Activated B cell treated with CpG ODN at 0.5 μM for 24 hours (primary cell): ENCODE measurements at regions of chrX and their contacts with region 1.

Region 1: DNA sequence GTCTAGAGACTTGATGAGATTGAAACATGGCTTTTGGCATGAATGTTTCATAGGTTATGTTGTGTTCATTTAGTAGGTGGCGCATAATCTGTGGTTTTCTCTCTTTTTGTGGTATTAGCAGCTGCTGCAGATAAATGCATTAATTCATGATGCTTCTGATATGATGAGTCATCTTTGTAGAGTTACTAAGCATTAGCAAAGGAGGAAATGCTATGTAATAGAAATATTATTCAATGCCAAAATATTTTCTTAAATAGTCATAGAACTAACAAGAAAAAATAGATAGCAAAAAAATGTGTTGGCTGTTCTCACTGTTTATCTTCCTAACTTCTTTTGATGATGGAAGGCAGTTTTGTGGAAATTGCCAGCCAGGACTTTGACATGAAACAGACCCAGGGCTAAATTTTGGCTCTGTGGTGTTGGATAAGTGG is 3.6 kb downstream of the ZXDB start:
- DNase-seq: no peak
- ATAC-seq: no peak
- H3K4me3 Mint-ChIP-seq: peak overlapping the region; percentile 74
- H3K27ac Mint-ChIP-seq: peak overlapping the region; percentile 35
- H3K4me1 Mint-ChIP-seq: peaks cover 49% of the 10 kb centered on the region
- H3K27me3 Mint-ChIP-seq: no peaks in the 10 kb centered on the region
- CTCF ChIP-seq: no peak

Region 2: DNA sequence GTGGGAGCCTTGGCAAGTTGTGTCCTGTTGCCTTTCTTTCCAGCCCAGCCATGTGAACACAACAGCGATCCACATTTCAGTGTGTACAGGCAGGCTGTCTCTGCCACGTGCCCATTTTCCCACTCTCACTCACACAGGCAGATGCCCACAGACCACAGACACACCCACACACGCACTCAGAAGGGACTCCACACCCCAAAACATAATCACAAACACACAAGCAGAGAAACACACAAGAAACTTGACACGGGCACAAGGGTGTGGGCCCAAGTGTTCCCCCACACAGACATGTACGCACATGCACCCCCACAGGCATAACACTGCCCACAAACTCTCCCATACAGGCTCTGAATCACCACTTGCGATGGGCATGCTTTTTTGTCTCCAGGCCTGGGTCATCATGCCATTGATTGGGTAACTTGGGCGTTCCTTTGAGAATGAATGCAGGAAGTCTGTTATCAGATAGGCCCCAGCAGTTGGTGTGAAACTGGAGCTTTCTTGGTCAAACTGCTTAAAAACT is 782.0 kb before region 1 on chrX:
- CTCF ChIA-PET with region 1: no interaction called
- POLR2A ChIA-PET with region 1: no interaction called
- intact Hi-C with region 1: loop called (anchors 5 kb)
- DNase-seq: no peak
- ATAC-seq: peak; percentile 39
- H3K4me3 Mint-ChIP-seq: peak overlapping the region; percentile 78
- H3K27ac Mint-ChIP-seq: peak overlapping the region; percentile 93
- H3K4me1 Mint-ChIP-seq: peaks cover 69% of the 10 kb centered on the region
- H3K27me3 Mint-ChIP-seq: no peaks in the 10 kb centered on the region
- CTCF ChIP-seq: no peak

Region 3: GRCh38 chrX:56995271-56995994 is 600.0 kb before region 1 on chrX and contains the start of gene SPIN3:
- CTCF ChIA-PET with region 1: no interaction called
- POLR2A ChIA-PET with region 1: no interaction called
- intact Hi-C with region 1: loop called (anchors 10 kb)
- DNase-seq: peak; percentile 22
- ATAC-seq: peak; percentile 88
- H3K4me3 Mint-ChIP-seq: peak within 1 kb of the TSS; percentile 91
- H3K27ac Mint-ChIP-seq: peak within 1 kb of the TSS; percentile 88
- H3K4me1 Mint-ChIP-seq: peaks cover 31% of the 10 kb centered on the region
- H3K27me3 Mint-ChIP-seq: no peaks in the 10 kb centered on the region
- CTCF ChIP-seq: no peak
- total RNA-seq, gene SPIN3: 17.5 and 19.2 TPM in 2 replicates

Region 4: DNA sequence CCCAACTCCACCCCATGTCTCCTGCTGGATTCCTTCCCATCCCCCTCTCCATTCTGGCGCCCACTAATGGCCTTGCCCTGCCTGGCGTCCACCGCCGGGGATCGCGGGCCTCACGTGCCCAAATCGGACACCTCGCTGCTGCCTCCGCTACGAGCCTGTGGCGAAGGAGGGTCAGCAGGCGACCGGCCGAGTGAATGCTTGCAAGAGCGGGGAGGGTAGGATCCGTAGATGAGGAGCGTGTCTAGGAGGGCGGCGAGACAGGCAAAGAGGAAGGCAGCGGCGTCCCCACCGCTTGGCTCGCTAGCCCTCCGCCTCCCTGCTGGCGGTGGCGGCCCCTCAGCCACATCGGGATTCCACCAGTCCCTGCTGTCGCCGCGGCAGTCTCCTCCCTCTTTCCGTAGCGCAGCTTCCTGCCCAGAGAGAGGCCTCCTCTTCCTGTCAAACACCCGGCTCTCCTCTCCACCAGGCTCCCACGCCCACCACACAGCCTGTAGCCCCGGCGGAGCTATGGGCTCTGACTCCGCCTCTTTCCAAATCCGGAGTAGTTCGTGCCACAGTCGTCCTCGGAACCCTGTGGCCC is 474.1 kb before region 1 on chrX and contains the start of gene SPIN2B:
- CTCF ChIA-PET with region 1: no interaction called
- POLR2A ChIA-PET with region 1: no interaction called
- intact Hi-C with region 1: loop called (anchors 5 kb)
- DNase-seq: peak; percentile 59
- ATAC-seq: peak; percentile 98
- H3K4me3 Mint-ChIP-seq: peak within 1 kb of the TSS; percentile 92
- H3K27ac Mint-ChIP-seq: peak within 1 kb of the TSS; percentile 87
- H3K4me1 Mint-ChIP-seq: peaks cover 22% of the 10 kb centered on the region
- H3K27me3 Mint-ChIP-seq: no peaks in the 10 kb centered on the region
- CTCF ChIP-seq: no peak
- total RNA-seq, gene SPIN2B: 11.0 and 16.2 TPM in 2 replicates

Region 5: GRCh38 chrX:57286507-57287251 is 308.7 kb before region 1 on chrX and contains the start of gene FAAH2:
- CTCF ChIA-PET with region 1: no interaction called
- POLR2A ChIA-PET with region 1: no interaction called
- intact Hi-C with region 1: no loop called
- DNase-seq: peak; percentile 15
- ATAC-seq: peak; percentile 80
- H3K4me3 Mint-ChIP-seq: peak within 1 kb of the TSS; percentile 75
- H3K27ac Mint-ChIP-seq: peak within 1 kb of the TSS; percentile 30
- H3K4me1 Mint-ChIP-seq: peaks cover 12% of the 10 kb centered on the region
- H3K27me3 Mint-ChIP-seq: no peaks in the 10 kb centered on the region
- CTCF ChIP-seq: no peak
- total RNA-seq, gene FAAH2: 2.8 and 3.1 TPM in 2 replicates

Region 6: DNA sequence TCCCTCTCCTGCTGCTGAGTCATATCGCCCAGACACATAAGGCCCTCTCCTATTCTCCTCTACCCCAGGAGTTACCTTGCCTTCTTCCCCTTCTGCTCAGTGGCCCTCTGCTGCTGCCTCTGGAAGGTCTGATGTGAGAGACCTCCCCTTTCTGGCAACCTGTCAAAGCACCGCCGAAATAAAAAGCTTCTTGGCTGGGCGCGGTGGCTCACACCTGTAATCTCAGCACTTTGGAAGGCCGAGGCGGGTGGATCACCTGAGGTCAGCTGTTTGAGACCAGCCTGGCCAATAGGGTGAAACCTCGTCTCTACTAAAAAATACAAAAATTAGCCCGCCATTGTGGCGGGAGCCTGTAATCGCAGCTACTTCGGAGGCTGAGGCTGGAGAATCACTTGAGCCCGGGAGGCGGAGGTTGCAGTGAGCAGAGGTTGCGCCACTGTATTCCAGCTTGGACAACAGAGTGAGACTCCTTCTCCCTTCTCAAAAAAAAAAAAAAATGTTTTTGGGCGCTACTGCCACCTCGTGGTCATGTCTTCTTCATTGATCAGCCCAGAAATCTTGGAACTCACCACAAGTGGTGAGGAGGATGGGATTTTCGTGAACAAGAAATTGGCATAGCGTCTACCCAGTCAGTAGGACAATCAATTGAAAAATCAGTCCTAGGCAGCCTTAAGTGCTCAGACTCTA is 323.5 kb after region 1 on chrX:
- CTCF ChIA-PET with region 1: no interaction called
- POLR2A ChIA-PET with region 1: no interaction called
- intact Hi-C with region 1: loop called (anchors 5 kb)
- DNase-seq: no peak
- ATAC-seq: no peak
- H3K4me3 Mint-ChIP-seq: no peak overlapping the region
- H3K27ac Mint-ChIP-seq: no peak overlapping the region
- H3K4me1 Mint-ChIP-seq: peaks cover 4% of the 10 kb centered on the region
- H3K27me3 Mint-ChIP-seq: no peaks in the 10 kb centered on the region
- CTCF ChIP-seq: no peak